ENCODE measurements at regions of chr2 and their contacts with region 1.

Region 1: GRCh38 chr2:109128048-109128465 is 948 bp upstream of the SH3RF3 start:
- DNase-seq: peak; percentile 73
- ATAC-seq: peak; percentile 63
- H3K4me3 Mint-ChIP-seq: peak overlapping the region; percentile 81
- H3K27ac Mint-ChIP-seq: peak overlapping the region; percentile 49
- H3K4me1 Mint-ChIP-seq: peaks cover 44% of the 10 kb centered on the region
- H3K27me3 Mint-ChIP-seq: peaks cover 18% of the 10 kb centered on the region
- CTCF ChIP-seq: peak; percentile 94

Region 2: DNA sequence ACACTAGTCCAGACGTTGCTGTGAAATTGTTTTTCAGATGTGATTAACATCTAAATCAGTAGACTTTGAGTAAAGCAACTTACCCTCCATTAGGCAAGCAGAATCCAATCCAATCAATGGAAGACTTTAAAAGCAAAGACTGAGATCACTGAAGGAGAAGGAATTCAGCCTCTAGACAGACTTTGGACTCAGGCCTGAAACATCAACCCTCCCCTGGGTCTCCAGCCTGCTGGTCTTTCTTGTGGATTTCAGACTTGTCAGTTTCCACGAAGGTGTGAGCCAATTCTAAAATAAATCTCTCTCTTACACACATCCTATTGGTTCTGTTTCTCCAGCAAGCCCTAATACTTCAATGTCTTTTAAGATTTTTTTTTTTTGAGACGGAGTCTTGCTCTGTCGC is 89.1 kb before region 1 on chr2:
- CTCF ChIA-PET with region 1: no interaction called
- POLR2A ChIA-PET with region 1: no interaction called
- intact Hi-C with region 1: no loop called
- DNase-seq: no peak
- ATAC-seq: no peak
- H3K4me3 Mint-ChIP-seq: no peak overlapping the region
- H3K27ac Mint-ChIP-seq: no peak overlapping the region
- H3K4me1 Mint-ChIP-seq: peaks cover 16% of the 10 kb centered on the region
- H3K27me3 Mint-ChIP-seq: no peaks in the 10 kb centered on the region
- CTCF ChIP-seq: no peak

Region 3: GRCh38 chr2:109110170-109110569 is 17.9 kb before region 1 on chr2:
- CTCF ChIA-PET with region 1: no interaction called
- POLR2A ChIA-PET with region 1: no interaction called
- intact Hi-C with region 1: no loop called
- DNase-seq: no peak
- ATAC-seq: no peak
- H3K4me3 Mint-ChIP-seq: no peak overlapping the region
- H3K27ac Mint-ChIP-seq: no peak overlapping the region
- H3K4me1 Mint-ChIP-seq: no peaks in the 10 kb centered on the region
- H3K27me3 Mint-ChIP-seq: no peaks in the 10 kb centered on the region
- CTCF ChIP-seq: no peak

Region 4: DNA sequence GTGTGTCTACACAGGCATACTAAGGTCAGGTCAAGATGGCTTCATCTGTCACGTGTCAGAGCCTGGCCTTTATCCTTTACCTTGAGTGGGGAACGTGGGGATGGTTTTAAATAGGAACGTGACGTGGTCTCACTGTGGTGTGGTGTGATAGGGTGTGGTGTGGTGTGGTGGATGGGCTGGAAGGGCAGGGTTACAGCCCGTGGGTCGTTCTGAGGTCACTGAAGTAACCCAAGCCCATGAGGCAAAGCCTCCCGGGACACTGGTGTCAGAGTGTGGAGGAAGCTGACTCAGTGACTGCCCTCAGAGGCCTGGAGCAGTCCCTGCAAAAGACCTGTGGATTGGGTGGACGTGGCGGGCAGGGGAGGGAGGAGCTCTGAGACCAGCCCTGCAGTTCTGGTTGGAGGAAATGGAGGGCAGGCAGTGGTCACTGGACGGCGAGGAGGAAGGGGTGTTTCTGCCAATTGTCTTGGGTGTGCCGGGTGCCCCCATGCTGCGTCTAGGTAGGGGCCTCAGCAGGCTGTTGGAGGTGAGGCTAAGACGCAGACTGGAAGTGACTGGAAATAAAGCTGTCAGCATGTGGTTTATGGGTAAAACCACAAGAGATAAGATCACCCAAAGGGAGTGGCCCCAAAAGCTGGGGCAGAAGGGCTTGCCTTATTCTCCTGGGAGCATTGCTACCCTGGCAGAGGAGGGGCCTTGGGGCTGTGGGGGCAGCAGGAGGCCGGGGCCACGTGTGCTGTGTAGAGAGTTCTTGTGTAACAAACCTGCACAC is 85.8 kb after region 1 on chr2:
- CTCF ChIA-PET with region 1: no interaction called
- POLR2A ChIA-PET with region 1: interaction called, 6 read pairs
- intact Hi-C with region 1: loop called (anchors 5 kb)
- DNase-seq: peak; percentile 81
- ATAC-seq: peak; percentile 76
- H3K4me3 Mint-ChIP-seq: peak overlapping the region; percentile 56
- H3K27ac Mint-ChIP-seq: peak overlapping the region; percentile 84
- H3K4me1 Mint-ChIP-seq: peaks cover 73% of the 10 kb centered on the region
- H3K27me3 Mint-ChIP-seq: peaks cover 59% of the 10 kb centered on the region
- CTCF ChIP-seq: no peak

Region 5: GRCh38 chr2:109510136-109511028 is 382.3 kb after region 1 on chr2:
- CTCF ChIA-PET with region 1: interaction called, 63 read pairs
- POLR2A ChIA-PET with region 1: interaction called, 8 read pairs
- intact Hi-C with region 1: loop called (anchors 2 kb)
- DNase-seq: peak; percentile 90
- ATAC-seq: peak; percentile 88
- H3K4me3 Mint-ChIP-seq: no peak overlapping the region
- H3K27ac Mint-ChIP-seq: no peak overlapping the region
- H3K4me1 Mint-ChIP-seq: peaks cover 2% of the 10 kb centered on the region
- H3K27me3 Mint-ChIP-seq: no peaks in the 10 kb centered on the region
- CTCF ChIP-seq: peak; percentile 87

Measured in activated CD8-positive, alpha-beta T cell treated with anti-CD3 and anti-CD28 coated beads for 36 hours (primary cell).